Right ventricle myocardium superior (tissue), 1 donor: ENCODE measurements at regions of chr16 and their contacts with region 1.

Region 1: DNA sequence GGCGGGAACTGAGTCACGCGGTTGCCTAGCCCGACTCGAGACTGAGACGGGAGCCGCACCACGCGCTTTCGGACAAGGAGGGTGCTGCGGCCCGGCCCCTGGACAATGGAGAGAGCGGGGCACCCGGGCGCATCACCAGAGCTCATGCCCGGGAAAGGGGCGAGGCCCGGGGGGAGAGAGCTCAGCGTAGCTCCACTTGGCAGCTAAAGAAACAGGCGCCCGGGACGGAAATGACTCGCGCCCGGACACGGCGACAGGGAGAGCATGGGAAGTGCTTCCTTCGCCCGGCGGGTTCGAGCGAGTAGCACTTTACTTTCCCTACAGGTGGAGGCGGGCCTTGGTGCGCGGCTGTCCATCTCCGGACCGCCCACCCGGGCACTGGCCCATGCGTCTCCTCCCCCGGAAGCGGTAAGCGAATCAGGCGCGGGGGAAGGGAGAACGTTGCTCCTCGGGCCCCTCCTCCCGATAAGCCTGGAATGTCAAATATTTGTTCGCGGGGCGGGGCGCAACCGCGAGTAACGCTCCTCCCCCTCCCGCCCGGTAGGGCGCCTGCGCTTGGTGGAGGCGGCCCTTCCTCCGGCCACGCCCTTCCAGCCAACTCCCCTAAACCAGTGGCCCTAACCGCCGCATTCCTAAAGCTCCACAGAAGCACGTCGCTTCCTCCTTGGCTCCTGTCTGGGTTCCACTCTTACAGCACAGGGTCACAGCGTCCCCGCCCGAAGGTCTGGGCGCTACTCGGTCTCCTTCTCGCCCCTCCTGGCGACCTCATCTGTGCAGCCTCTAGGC is 1.5 kb upstream of the ESRP2 start:
- DNase-seq: peak; percentile 98
- ATAC-seq: peak; percentile 91

Region 2: GRCh38 chr16:67521095-67521804 is 716.2 kb before region 1 on chr16:
- intact Hi-C with region 1: no loop called
- DNase-seq: peak; percentile 96
- ATAC-seq: peak; percentile 97

Region 3: GRCh38 chr16:68328151-68328859 is 90.9 kb after region 1 on chr16:
- intact Hi-C with region 1: loop called (anchors 2 kb)
- DNase-seq: peak; percentile 82
- ATAC-seq: peak; percentile 94

Region 4: GRCh38 chr16:68382296-68382718 is 144.9 kb after region 1 on chr16:
- intact Hi-C with region 1: no loop called
- DNase-seq: no peak
- ATAC-seq: no peak